CD4-positive, alpha-beta memory T cell (primary cell): ENCODE measurements at regions of chr6 and their contacts with region 1.

Region 1: DNA sequence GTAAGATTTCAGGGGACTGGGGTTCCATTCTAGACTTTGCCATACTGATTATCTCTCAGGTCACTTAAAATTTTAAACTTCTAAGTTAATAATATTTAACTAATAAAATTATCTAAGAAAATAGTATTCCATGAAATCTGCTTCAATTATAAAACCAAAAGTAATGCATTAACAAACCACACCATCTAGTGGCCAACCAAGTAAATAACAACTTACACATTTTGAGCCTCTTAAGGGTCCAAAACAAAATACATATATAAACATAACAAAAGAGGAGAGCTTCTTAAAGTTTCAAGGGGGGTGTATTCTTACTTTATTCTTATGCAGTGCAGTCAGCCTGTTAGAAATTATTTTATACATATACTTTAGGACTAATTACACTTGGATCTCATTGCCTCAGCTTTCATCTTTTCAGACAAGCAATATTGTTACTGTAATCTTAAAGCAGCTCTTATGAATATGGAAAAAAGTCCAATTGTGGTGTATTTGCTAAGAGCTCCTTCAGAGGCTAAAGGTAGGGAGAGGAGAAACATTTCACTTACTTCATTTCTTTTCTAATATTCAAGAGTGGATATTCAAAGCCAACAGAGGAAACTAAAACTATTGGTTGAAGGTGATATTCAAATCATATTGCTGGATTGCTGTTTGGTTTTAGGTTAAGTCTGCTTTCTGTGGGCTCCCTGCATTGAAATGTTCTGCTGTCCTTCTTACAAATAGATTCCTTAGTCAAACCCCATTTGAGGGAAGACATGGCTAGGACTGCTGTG is 199.7 kb upstream of the SIM1 start:
- DNase-seq: peak in 4 of 5 donors; percentile 9 to 36 (median 16)
- H3K4me3 ChIP-seq: no peak overlapping the region
- H3K4me3 Mint-ChIP-seq: no peak overlapping the region
- H3K27ac ChIP-seq: no peak overlapping the region
- H3K27ac Mint-ChIP-seq: peak overlapping the region; percentile 14 to 84 (median 37)
- H3K4me1 ChIP-seq: no peaks in the 10 kb centered on the region
- H3K4me1 Mint-ChIP-seq: peaks cover 0 to 11% (median 6%) of the 10 kb centered on the region in 4 donors
- H3K27me3 ChIP-seq: no peaks in the 10 kb centered on the region
- H3K27me3 Mint-ChIP-seq: no peaks in the 10 kb centered on the region

Region 2: GRCh38 chr6:100001915-100002388 is 662.5 kb before region 1 on chr6:
- CTCF ChIA-PET with region 1: interaction called, 9 read pairs
- POLR2A ChIA-PET with region 1: no interaction called
- intact Hi-C with region 1: loop called (anchors 1 kb)
- DNase-seq: peak in 4 of 5 donors; percentile 23 to 33 (median 32)
- H3K4me3 ChIP-seq: no peak overlapping the region
- H3K4me3 Mint-ChIP-seq: no peak overlapping the region
- H3K27ac ChIP-seq: no peak overlapping the region
- H3K27ac Mint-ChIP-seq: no peak overlapping the region
- H3K4me1 ChIP-seq: no peaks in the 10 kb centered on the region
- H3K4me1 Mint-ChIP-seq: no peaks in the 10 kb centered on the region
- H3K27me3 ChIP-seq: peaks cover 4% of the 10 kb centered on the region
- H3K27me3 Mint-ChIP-seq: peaks cover 9 to 16% of the 10 kb centered on the region in 2 donors

Region 3: GRCh38 chr6:100099189-100100074 is 565.0 kb before region 1 on chr6:
- CTCF ChIA-PET with region 1: no interaction called
- POLR2A ChIA-PET with region 1: no interaction called
- intact Hi-C with region 1: loop called (anchors 5 kb)
- DNase-seq: peak in 1 of 5 donors; percentile 9
- H3K4me3 ChIP-seq: no peak overlapping the region
- H3K4me3 Mint-ChIP-seq: no peak overlapping the region
- H3K27ac ChIP-seq: no peak overlapping the region
- H3K27ac Mint-ChIP-seq: no peak overlapping the region
- H3K4me1 ChIP-seq: no peaks in the 10 kb centered on the region
- H3K4me1 Mint-ChIP-seq: no peaks in the 10 kb centered on the region
- H3K27me3 ChIP-seq: no peaks in the 10 kb centered on the region
- H3K27me3 Mint-ChIP-seq: peaks cover 7% of the 10 kb centered on the region in 2 donors

Region 4: GRCh38 chr6:100685747-100686146 is 21.3 kb after region 1 on chr6:
- CTCF ChIA-PET with region 1: interaction called, 10 read pairs
- POLR2A ChIA-PET with region 1: no interaction called
- intact Hi-C with region 1: no loop called
- DNase-seq: no peak
- H3K4me3 ChIP-seq: no peak overlapping the region
- H3K4me3 Mint-ChIP-seq: no peak overlapping the region
- H3K27ac ChIP-seq: no peak overlapping the region
- H3K27ac Mint-ChIP-seq: no peak overlapping the region
- H3K4me1 ChIP-seq: no peaks in the 10 kb centered on the region
- H3K4me1 Mint-ChIP-seq: peaks cover 0 to 3% (median 0%) of the 10 kb centered on the region in 4 donors
- H3K27me3 ChIP-seq: no peaks in the 10 kb centered on the region
- H3K27me3 Mint-ChIP-seq: no peaks in the 10 kb centered on the region